ENCODE measurements at regions of chr6 and their contacts with region 1.

Region 1: GRCh38 chr6:32558426-32559057 is 28.5 kb upstream of the HLA-DRB5 start:
- DNase-seq: no peak
- H3K4me3 ChIP-seq: no peak overlapping the region
- H3K27ac ChIP-seq: no peak overlapping the region
- H3K4me1 ChIP-seq: no peaks in the 10 kb centered on the region
- H3K27me3 ChIP-seq: no peaks in the 10 kb centered on the region
- CTCF ChIP-seq: no peak

Region 2: GRCh38 chr6:30646458-30647241 is 1911.9 kb before region 1 on chr6 and contains the start of gene C6orf136:
- CTCF ChIA-PET with region 1: no interaction called
- POLR2A ChIA-PET with region 1: no interaction called
- intact Hi-C with region 1: no loop called
- DNase-seq: peak; percentile 96
- H3K4me3 ChIP-seq: peak within 1 kb of the TSS; percentile 99
- H3K27ac ChIP-seq: peak within 1 kb of the TSS; percentile 92
- H3K4me1 ChIP-seq: peaks cover 10% of the 10 kb centered on the region
- H3K27me3 ChIP-seq: no peaks in the 10 kb centered on the region
- CTCF ChIP-seq: no peak
- total RNA-seq, gene C6orf136: 25.0 and 35.9 TPM in 2 replicates

Region 3: GRCh38 chr6:32568561-32568960 is 10.0 kb after region 1 on chr6:
- CTCF ChIA-PET with region 1: no interaction called
- POLR2A ChIA-PET with region 1: no interaction called
- intact Hi-C with region 1: no loop called
- DNase-seq: no peak
- H3K4me3 ChIP-seq: no peak overlapping the region
- H3K27ac ChIP-seq: no peak overlapping the region
- H3K4me1 ChIP-seq: no peaks in the 10 kb centered on the region
- H3K27me3 ChIP-seq: no peaks in the 10 kb centered on the region
- CTCF ChIP-seq: no peak

Region 4: DNA sequence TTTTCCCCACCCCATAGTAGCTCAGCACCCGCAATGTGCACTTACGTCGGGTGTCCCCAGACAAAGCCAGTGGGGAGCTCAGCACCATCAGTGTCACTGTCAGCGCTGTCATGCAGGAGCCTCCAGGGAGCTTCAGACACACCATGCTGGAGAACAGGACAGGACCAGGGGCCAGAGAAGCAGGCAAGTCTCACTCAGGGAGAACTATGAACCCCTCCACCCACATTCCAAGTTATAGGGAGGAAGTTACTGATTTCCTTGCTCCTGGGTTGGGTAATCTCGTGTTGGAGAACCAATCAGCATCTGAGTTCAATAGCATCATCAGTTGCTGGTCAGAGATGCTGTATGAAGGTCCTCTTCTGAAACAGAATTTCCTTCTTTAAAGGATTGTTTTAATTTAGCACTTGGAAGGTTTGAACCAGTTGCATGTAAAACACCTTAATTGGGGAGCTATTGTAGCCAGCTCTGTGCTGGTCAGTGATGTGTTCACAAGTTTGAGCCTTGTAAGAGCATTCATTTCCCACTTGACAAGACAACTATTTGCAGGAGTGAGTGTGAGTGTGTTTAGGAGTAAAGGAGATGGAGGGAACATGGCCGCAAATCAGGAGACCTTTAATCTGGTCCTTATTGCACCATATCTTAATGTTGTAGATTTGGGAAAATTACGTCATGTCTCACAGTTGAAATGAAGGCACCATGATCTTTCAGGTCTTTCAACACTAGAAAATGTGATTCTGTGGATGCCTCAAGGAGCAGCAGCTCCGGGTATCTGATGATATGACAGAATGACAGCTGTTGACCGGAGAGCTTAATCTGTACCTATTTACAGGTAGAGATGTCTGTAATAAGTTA is 31.3 kb after region 1 on chr6 and contains the start of gene HLA-DRB1:
- CTCF ChIA-PET with region 1: no interaction called
- POLR2A ChIA-PET with region 1: no interaction called
- intact Hi-C with region 1: loop called (anchors 1 kb)
- DNase-seq: peak; percentile 5
- H3K4me3 ChIP-seq: no peak within 1 kb of the TSS
- H3K27ac ChIP-seq: no peak within 1 kb of the TSS
- H3K4me1 ChIP-seq: no peaks in the 10 kb centered on the region
- H3K27me3 ChIP-seq: peaks cover 7% of the 10 kb centered on the region
- CTCF ChIP-seq: no peak
- total RNA-seq, gene HLA-DRB1: not detected in 2 replicates

Region 5: DNA sequence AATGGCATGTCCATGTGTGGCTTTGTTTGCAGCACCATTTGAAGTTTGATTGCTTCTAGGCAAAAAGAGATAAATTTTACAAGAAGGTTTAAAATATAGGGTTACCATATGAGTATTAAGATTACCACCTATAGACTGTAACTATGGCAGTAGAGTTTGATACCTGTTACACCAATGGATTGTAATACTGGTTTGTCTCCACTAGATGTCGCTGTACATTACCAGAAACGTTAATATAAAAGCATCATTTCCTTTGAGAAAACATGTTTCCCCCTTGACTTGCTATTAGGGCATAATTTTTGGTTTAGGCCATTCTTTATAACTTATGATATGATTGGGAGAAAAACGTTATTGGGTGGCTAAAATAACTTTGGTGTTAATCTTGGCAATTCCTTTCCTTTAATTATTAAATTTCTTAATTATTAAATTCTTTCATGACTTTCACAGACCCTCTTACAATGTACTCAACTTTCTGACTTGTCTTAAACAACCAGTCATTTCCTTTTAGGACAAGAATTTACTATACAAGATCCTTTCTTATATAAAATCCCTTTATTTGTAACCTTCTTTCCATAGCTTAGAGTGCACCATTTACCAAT is 560.1 kb after region 1 on chr6:
- CTCF ChIA-PET with region 1: no interaction called
- POLR2A ChIA-PET with region 1: no interaction called
- intact Hi-C with region 1: no loop called
- DNase-seq: peak; percentile 71
- H3K4me3 ChIP-seq: no peak overlapping the region
- H3K27ac ChIP-seq: no peak overlapping the region
- H3K4me1 ChIP-seq: peaks cover 5% of the 10 kb centered on the region
- H3K27me3 ChIP-seq: peaks cover 39% of the 10 kb centered on the region
- CTCF ChIP-seq: peak; percentile 82

Measured in A673 (cell line).